ENCODE measurements at regions of chr15 and their contacts with region 1.

Region 1: DNA sequence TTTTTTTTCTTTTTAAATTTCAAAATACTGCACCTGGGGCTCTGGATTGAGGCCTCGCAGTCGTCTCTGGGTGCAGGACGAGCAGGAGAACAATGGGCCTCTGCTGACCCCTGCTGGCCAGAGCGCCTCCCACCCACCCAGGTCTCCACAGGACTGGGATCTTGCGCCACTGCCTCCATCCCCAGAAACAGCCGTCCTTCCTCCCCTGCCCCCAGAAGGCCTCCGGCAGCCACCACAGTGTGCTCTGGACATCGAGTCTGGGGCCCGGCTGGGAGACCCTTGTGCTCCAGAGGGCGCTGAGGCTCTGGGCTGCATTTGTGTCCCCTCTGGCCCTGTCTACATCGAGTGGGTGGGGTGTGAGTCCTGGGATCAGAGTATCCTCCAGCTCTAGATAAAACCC is 6.6 kb upstream of the ACSBG1 start:
- DNase-seq: no peak
- H3K4me3 ChIP-seq: no peak overlapping the region
- H3K27me3 ChIP-seq: peaks cover 3% of the 10 kb centered on the region
- CTCF ChIP-seq: peak; percentile 93

Region 2: DNA sequence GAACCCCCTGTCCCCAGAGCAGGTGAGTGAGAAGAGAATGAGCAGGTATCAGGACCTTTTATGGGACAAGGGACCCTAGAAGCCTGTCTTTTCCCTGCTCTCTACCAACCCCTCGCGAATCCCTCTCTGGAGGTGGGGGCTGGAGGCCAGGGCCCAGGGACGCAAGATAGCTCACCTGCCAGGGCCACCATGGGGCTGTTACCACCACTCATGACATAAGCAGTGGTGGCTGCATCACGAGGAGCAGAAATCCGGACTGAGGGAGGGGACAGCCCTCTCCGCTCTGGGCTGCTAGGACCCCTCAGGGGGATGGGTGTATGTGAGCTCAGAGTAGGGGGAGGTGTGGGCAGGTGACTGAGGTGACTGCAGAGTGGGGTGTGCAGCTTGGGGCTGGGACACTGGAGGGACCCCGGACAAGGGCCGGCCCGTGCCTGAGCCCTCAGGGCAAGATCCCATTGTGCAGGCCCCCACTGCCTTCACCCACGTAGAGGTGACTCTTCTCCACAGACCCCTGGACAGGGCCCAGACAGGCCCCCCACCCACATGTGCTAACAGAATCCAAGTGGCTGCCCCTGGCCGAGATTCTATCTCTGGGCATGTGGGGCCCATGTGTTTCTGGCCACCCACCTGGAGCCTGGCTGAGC is 354.1 kb before region 1 on chr15:
- CTCF ChIA-PET with region 1: no interaction called
- POLR2A ChIA-PET with region 1: no interaction called
- DNase-seq: no peak
- H3K4me3 ChIP-seq: no peak overlapping the region
- H3K27me3 ChIP-seq: no peaks in the 10 kb centered on the region
- CTCF ChIP-seq: no peak

Region 3: DNA sequence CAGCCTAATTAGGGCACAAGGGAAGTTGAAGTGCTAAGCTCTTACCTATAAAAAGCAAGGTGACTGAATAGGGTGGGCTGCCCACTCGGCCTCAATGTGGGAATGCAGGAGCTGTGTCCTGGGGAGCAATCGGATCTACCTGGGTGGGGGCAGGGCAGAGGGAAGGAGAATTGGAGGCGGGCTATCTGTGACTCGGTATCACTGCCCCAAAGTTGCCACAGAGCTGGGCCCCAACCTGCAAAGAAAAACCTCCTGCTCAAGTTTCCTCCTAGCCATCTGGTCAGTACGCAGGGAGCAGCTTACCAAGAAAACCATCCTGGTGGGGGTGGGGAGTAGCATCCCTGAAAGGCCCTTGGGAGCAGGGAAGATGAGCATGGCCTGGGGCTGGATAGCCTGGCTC is 120.5 kb before region 1 on chr15:
- CTCF ChIA-PET with region 1: interaction called, 177 read pairs
- POLR2A ChIA-PET with region 1: no interaction called
- DNase-seq: no peak
- H3K4me3 ChIP-seq: no peak overlapping the region
- H3K27me3 ChIP-seq: no peaks in the 10 kb centered on the region
- CTCF ChIP-seq: no peak

Region 4: GRCh38 chr15:78140292-78140691 is 100.7 kb before region 1 on chr15:
- CTCF ChIA-PET with region 1: interaction called, 14 read pairs
- POLR2A ChIA-PET with region 1: no interaction called
- DNase-seq: no peak
- H3K4me3 ChIP-seq: no peak overlapping the region
- H3K27me3 ChIP-seq: no peaks in the 10 kb centered on the region
- CTCF ChIP-seq: no peak

Region 5: GRCh38 chr15:78195735-78196201 is 45.2 kb before region 1 on chr15:
- CTCF ChIA-PET with region 1: interaction called, 16 read pairs
- POLR2A ChIA-PET with region 1: no interaction called
- DNase-seq: no peak
- H3K4me3 ChIP-seq: no peak overlapping the region
- H3K27me3 ChIP-seq: no peaks in the 10 kb centered on the region; the same call in 1 of the 2 replicates
- CTCF ChIP-seq: peak; percentile 68

Region 6: DNA sequence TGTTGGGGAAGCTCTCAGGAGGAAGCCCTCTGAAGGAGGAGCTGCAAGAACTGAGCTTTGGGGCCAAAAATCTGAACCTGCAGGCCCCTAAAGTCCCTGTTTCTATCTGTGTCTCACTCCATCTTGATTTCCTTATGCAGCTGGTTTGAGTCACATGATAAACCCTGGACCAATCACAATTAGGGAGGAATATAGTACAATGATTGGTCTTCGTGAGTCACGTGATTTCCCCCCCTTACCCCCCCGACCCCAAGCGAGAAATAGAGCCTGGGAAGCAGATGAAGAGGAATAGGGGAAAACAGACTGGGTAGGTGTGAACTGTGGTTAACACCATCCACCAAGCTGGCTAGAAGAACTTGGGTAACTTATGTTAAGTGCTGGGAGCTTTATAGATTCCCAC is 112.1 kb after region 1 on chr15:
- CTCF ChIA-PET with region 1: no interaction called
- POLR2A ChIA-PET with region 1: no interaction called
- DNase-seq: no peak
- H3K4me3 ChIP-seq: no peak overlapping the region
- H3K27me3 ChIP-seq: peaks cover 4% of the 10 kb centered on the region
- CTCF ChIP-seq: no peak

Measured in BJ (cell line).